AG04449 (cell line): ENCODE measurements at regions of chr1 and their contacts with region 1.

Region 1: GRCh38 chr1:40684669-40685068 is 6.8 kb upstream of the NFYC start:
- DNase-seq: no peak
- H3K4me3 ChIP-seq: no peak overlapping the region
- CTCF ChIP-seq: no peak

Region 2: DNA sequence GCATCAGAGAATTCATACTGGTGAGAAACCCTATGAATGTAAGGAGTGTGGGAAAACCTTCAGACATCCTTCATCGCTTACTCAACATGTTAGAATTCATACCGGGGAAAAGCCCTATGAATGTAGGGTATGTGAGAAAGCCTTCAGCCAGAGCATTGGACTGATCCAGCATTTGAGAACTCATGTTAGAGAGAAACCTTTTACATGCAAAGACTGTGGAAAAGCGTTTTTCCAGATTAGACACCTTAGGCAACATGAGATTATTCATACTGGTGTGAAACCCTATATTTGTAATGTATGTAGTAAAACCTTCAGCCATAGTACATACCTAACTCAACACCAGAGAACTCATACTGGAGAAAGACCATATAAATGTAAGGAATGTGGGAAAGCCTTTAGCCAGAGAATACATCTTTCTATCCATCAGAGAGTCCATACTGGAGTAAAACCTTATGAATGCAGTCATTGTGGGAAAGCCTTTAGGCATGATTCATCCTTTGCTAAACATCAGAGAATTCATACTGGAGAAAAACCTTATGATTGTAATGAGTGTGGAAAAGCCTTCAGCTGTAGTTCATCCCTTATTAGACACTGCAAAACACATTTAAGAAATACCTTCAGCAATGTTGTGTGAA is 221.6 kb before region 1 on chr1:
- CTCF ChIA-PET with region 1: no interaction called
- POLR2A ChIA-PET with region 1: no interaction called
- DNase-seq: no peak
- H3K4me3 ChIP-seq: no peak overlapping the region
- CTCF ChIP-seq: no peak

Region 3: GRCh38 chr1:40668769-40669525 is 15.7 kb before region 1 on chr1:
- CTCF ChIA-PET with region 1: interaction called, 59 read pairs
- POLR2A ChIA-PET with region 1: no interaction called
- DNase-seq: no peak
- H3K4me3 ChIP-seq: no peak overlapping the region
- CTCF ChIP-seq: peak; percentile 86

Region 4: DNA sequence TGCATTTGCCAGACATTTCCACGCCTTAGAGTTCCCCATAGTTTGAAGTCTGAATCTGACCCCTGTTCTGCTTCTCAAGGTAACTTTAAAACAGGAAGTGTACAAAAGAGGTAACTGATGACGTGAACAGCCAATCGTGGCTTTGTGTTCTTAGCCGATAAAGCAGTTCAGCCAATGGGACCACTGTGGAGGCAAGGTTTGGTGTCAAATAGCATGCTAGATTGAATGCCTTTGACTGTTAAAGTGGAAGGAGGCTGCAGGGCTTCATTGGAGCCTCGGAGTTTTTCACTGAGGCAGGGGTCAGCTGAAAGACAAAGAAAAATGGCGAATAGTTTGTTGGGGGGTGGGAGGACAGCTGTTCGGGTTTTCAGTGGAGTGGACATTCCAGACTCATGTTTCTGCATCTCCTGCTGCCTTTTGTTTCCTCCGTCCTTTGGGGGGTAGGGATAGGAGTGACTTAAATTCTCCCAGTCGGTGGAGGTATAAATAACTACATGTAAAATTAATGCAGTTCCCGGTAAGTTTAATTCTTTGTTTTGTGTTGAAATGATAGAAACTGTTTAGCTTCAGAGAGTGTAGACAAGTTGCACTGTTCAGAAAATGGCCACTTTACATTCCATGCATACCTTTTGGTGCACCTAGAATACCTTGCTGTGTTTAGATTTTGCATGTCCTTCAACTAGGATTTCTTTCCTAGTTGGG is 24.6 kb after region 1 on chr1:
- CTCF ChIA-PET with region 1: no interaction called
- POLR2A ChIA-PET with region 1: no interaction called
- DNase-seq: peak; percentile 80
- H3K4me3 ChIP-seq: peak overlapping the region; percentile 68
- CTCF ChIP-seq: no peak